H1 (cell line): ENCODE measurements at regions of chrX and their contacts with region 1.

Region 1: GRCh38 chrX:154348114-154348531 is 26.3 kb downstream of the FLNA start:
- DNase-seq: no peak
- H3K4me3 ChIP-seq: no peak overlapping the region
- H3K27ac ChIP-seq: no peak overlapping the region
- H3K4me1 ChIP-seq: no peaks in the 10 kb centered on the region
- H3K27me3 ChIP-seq: no peaks in the 10 kb centered on the region
- CTCF ChIP-seq: no peak
- EP300 ChIP-seq: no peak
- POLR2A ChIP-seq: no peak
- RAD21 ChIP-seq: no peak

Region 2: GRCh38 chrX:154370882-154371770 is 23.0 kb after region 1 on chrX:
- CTCF ChIA-PET with region 1: interaction called, 4 read pairs
- POLR2A ChIA-PET with region 1: interaction called, 348 read pairs
- DNase-seq: peak; percentile 56 to 82
- H3K4me3 ChIP-seq: peak overlapping the region; percentile 82 to 96 (median 90)
- H3K27ac ChIP-seq: peak overlapping the region; percentile 97
- H3K4me1 ChIP-seq: peaks cover 0 to 18% (median 11%) of the 10 kb centered on the region in 4 experiments; a peak in 6 of 7 replicates
- H3K27me3 ChIP-seq: no peaks in the 10 kb centered on the region; a peak in 2 of 7 replicates
- CTCF ChIP-seq: no peak
- EP300 ChIP-seq: no peak
- POLR2A ChIP-seq: peak in 1 of 2 experiments; percentile 96; a peak in 2 of 3 replicates
- RAD21 ChIP-seq: no peak

Region 3: DNA sequence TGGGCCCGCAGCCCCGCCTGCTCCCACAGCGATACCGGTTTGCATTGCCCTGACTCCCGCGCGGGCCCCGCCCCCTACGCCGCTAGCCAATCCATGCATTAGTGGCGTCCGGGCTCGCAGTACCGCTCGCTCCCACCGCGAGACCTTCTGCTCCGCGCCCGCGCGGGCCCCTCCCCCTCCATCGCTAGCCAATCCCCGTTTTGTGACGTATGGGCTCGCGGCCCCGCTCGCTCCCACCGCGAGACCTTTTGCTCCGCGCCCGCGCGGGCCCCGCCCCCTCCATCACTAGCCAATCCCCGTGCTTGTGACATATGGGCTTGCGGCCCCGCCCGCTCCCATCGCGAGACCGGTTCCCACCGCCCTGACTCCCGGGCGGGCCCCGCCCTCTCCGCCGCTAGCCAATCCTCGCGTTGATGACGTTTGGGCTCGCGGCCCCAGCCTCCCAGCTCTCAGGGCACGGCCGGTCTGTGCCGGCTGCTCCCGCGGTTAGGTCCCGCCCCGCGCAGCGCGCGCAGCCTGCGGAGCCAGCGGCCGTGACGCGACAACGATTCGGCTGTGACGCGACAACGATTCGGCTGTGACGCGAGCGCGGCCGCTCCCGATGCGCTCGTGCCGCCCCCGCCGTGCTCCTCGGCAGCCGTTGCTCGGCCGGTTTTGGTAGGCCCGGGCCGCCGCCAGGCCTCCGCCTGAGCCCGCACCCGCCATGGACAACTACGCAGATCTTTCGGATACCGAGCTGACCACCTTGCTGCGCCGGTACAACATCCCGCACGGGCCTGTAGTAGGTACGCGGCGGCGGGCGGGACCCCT is 30.9 kb after region 1 on chrX and contains the start of gene EMD:
- CTCF ChIA-PET with region 1: interaction called, 4 read pairs
- POLR2A ChIA-PET with region 1: interaction called, 22 read pairs
- DNase-seq: peak; percentile 90 to 93
- H3K4me3 ChIP-seq: peak within 1 kb of the TSS; percentile 75 to 97 (median 78)
- H3K27ac ChIP-seq: peak within 1 kb of the TSS; percentile 96
- H3K4me1 ChIP-seq: peaks cover 0 to 22% (median 10%) of the 10 kb centered on the region in 4 experiments; a peak in 6 of 7 replicates
- H3K27me3 ChIP-seq: peaks cover 0 to 3% (median 0%) of the 10 kb centered on the region in 4 experiments; a peak in 2 of 7 replicates
- CTCF ChIP-seq: no peak
- EP300 ChIP-seq: no peak
- POLR2A ChIP-seq: peak in 1 of 2 experiments; percentile 40; a peak in 1 of 3 replicates
- RAD21 ChIP-seq: no peak
- total RNA-seq, gene EMD: 104 and 109 TPM in 2 replicates

Region 4: GRCh38 chrX:154384284-154384892 is 36.3 kb after region 1 on chrX:
- CTCF ChIA-PET with region 1: interaction called, 4 read pairs
- POLR2A ChIA-PET with region 1: interaction called, 22 read pairs
- DNase-seq: no peak
- H3K4me3 ChIP-seq: no peak overlapping the region
- H3K27ac ChIP-seq: no peak overlapping the region
- H3K4me1 ChIP-seq: peaks cover 0 to 19% (median 9%) of the 10 kb centered on the region in 4 experiments; a peak in 6 of 7 replicates
- H3K27me3 ChIP-seq: no peaks in the 10 kb centered on the region
- CTCF ChIP-seq: peak in 1 of 3 experiments; percentile 17; a peak in 1 of 4 replicates
- EP300 ChIP-seq: no peak
- POLR2A ChIP-seq: no peak
- RAD21 ChIP-seq: peak in 1 of 2 experiments; percentile 19; a peak in 1 of 4 replicates